ENCODE measurements at regions of chr6 and their contacts with region 1.

Region 1: DNA sequence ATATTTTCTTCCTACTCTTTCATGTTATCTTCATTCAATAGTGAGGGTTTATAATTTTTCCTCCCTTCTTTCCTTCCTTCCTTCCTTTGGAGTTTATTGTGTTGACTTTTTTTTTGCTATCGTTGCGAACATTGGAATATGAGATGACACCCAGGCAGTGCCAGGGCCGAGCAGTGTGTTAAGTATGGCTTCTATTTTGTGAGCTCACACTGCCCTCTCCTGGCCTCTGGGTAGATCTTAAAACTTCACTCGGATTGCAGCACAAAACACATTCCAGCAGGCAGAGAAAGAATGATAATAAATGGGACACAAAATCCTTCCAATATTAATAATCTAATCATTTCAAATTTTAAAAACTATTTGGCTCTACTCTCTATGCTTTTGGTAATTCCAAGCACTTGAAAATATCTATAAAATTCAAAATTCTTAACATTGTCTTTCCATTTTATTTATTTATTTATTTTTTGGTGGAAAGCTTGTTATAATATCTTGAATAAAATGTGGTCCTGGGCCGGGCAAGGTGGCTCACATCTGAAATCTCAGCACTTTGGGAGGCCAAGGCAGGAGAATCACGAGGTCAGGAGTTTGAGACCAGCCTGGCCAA is 147.4 kb upstream of the OLIG3 start:
- DNase-seq: peak; percentile 64 to 77 (median 73)
- H3K4me3 ChIP-seq: no peak overlapping the region
- H3K27ac ChIP-seq: no peak overlapping the region
- H3K4me1 ChIP-seq: peaks cover 2% of the 10 kb centered on the region
- H3K27me3 ChIP-seq: no peaks in the 10 kb centered on the region
- CTCF ChIP-seq: peak; percentile 19 to 63 (median 51)
- EP300 ChIP-seq: no peak
- POLR2A ChIP-seq: no peak

Region 2: GRCh38 chr6:137089305-137089704 is 552.3 kb before region 1 on chr6:
- intact Hi-C with region 1: loop called in 2 of 4 experiments (anchors 5 to 10 kb)
- DNase-seq: no peak
- H3K4me3 ChIP-seq: no peak overlapping the region
- H3K27ac ChIP-seq: no peak overlapping the region
- H3K4me1 ChIP-seq: no peaks in the 10 kb centered on the region
- H3K27me3 ChIP-seq: no peaks in the 10 kb centered on the region
- CTCF ChIP-seq: no peak
- EP300 ChIP-seq: no peak
- POLR2A ChIP-seq: no peak

Region 3: GRCh38 chr6:137094411-137095008 is 547.1 kb before region 1 on chr6:
- intact Hi-C with region 1: loop called in 2 of 4 experiments (anchors 5 to 10 kb)
- DNase-seq: peak; percentile 25 to 69 (median 51)
- H3K4me3 ChIP-seq: no peak overlapping the region
- H3K27ac ChIP-seq: no peak overlapping the region
- H3K4me1 ChIP-seq: no peaks in the 10 kb centered on the region
- H3K27me3 ChIP-seq: no peaks in the 10 kb centered on the region
- CTCF ChIP-seq: peak; percentile 57 to 73 (median 69)
- EP300 ChIP-seq: no peak
- POLR2A ChIP-seq: no peak

Region 4: GRCh38 chr6:137291441-137291840 is 350.1 kb before region 1 on chr6:
- intact Hi-C with region 1: loop called in 1 of 4 experiments (anchors 10 kb)
- DNase-seq: no peak
- H3K4me3 ChIP-seq: no peak overlapping the region
- H3K27ac ChIP-seq: no peak overlapping the region
- H3K4me1 ChIP-seq: no peaks in the 10 kb centered on the region
- H3K27me3 ChIP-seq: no peaks in the 10 kb centered on the region
- CTCF ChIP-seq: no peak
- EP300 ChIP-seq: no peak
- POLR2A ChIP-seq: no peak

Region 5: GRCh38 chr6:137705160-137706082 is 63.8 kb after region 1 on chr6:
- intact Hi-C with region 1: no loop called
- DNase-seq: peak; percentile 80 to 90 (median 87)
- H3K4me3 ChIP-seq: no peak overlapping the region
- H3K27ac ChIP-seq: peak overlapping the region; percentile 36 to 63
- H3K4me1 ChIP-seq: peaks cover 23% of the 10 kb centered on the region
- H3K27me3 ChIP-seq: no peaks in the 10 kb centered on the region
- CTCF ChIP-seq: peak; percentile 73 to 88 (median 86)
- EP300 ChIP-seq: no peak
- POLR2A ChIP-seq: no peak

Measured in ovary (tissue), 10 donors.